ENCODE measurements at regions of chr1 and their contacts with region 1.

Region 1: DNA sequence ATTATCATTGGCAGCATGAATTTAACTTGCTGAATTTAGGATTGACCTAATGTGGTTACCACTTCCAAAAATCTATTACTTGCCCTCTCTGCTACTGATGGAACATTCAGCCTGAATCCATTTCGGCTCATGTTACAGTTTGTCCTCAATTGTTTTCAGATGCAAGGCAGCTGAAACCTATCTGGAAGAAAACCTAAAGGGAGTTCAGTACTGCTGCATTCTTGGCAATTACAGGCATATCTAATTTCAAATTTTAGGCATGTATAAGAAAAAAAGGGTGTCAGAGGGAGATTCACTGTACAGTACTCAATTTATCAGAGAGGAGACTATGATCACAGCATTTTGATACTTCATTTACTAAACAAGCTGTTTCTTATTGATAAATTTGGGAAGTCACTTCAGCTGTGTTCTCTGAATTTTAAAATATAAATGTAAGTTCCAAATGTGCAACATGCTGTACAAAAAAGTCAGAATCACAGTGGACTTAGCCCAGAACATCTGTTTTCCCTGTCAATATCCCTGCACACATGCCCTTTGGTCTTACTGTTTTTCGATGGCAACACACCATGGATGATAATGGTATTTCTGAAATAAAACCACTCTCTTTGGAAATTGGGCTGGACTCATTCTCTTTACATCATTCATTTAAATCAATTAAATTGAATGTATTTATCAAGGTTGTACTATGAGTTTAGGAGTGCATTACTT is 651.6 kb upstream of the ADGRL4 start:
- DNase-seq: no peak
- H3K4me3 ChIP-seq: no peak overlapping the region
- H3K27ac ChIP-seq: no peak overlapping the region
- H3K4me1 ChIP-seq: no peaks in the 10 kb centered on the region
- H3K27me3 ChIP-seq: no peaks in the 10 kb centered on the region
- CTCF ChIP-seq: no peak

Region 2: GRCh38 chr1:79551321-79551720 is 106.8 kb before region 1 on chr1:
- CTCF ChIA-PET with region 1: no interaction called
- dilution Hi-C with region 1: no loop called
- in situ Hi-C with region 1: no loop called
- intact Hi-C with region 1: loop called (anchors 10 kb)
- DNase-seq: no peak
- H3K4me3 ChIP-seq: no peak overlapping the region
- H3K27ac ChIP-seq: no peak overlapping the region
- H3K4me1 ChIP-seq: no peaks in the 10 kb centered on the region
- H3K27me3 ChIP-seq: no peaks in the 10 kb centered on the region
- CTCF ChIP-seq: no peak

Measured in mammary epithelial cell (primary cell).